AG04449 (cell line): ENCODE measurements at regions of chr1 and their contacts with region 1.

Region 1: GRCh38 chr1:19743793-19744192 is 55.9 kb downstream of the TMCO4 start:
- DNase-seq: no peak
- H3K4me3 ChIP-seq: no peak overlapping the region
- CTCF ChIP-seq: no peak

Region 2: GRCh38 chr1:19762175-19762779 is 18.5 kb after region 1 on chr1:
- CTCF ChIA-PET with region 1: interaction called, 12 read pairs
- POLR2A ChIA-PET with region 1: no interaction called
- DNase-seq: no peak
- H3K4me3 ChIP-seq: no peak overlapping the region
- CTCF ChIP-seq: peak; percentile 81